ENCODE measurements at regions of chr11 and their contacts with region 1.

Region 1: DNA sequence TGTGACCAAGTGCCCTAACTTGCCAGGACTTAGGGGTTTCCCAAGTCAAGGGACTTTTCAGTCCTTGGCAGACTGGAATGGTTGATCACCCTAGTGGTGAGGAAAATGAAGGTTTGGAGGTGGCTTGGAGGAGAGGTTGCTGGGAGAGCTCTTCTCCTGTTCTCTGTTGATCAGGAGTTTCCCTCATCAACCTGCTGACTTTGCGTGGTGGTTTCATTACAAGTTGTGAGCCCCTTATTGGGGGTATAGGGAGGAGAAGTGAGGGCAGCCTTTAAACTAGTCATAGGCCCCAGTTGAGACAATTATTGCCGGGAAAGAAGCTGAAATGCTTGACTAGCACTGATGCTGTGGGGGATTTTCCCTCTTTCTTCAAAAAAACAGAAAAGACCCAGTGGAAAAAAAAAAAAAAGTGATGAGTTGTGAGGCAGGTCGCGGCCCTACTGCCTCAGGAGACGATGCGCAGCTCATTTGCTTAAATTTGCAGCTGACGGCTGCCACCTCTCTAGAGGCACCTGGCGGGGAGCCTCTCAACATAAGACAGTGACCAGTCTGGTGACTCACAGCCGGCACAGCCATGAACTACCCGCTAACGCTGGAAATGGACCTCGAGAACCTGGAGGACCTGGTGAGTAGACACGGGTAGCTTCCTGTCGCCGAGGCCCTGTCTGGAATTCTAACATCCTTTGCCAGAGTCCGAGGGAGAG is at the start of gene CXCR5:
- DNase-seq: peak; percentile 72
- H3K4me3 Mint-ChIP-seq: peak within 1 kb of the TSS; percentile 66
- H3K27ac Mint-ChIP-seq: peak within 1 kb of the TSS; percentile 83
- H3K4me1 Mint-ChIP-seq: peaks cover 59% of the 10 kb centered on the region
- H3K27me3 Mint-ChIP-seq: no peaks in the 10 kb centered on the region
- total RNA-seq, gene CXCR5: 6.1 and 6.4 TPM in 2 replicates

Region 2: DNA sequence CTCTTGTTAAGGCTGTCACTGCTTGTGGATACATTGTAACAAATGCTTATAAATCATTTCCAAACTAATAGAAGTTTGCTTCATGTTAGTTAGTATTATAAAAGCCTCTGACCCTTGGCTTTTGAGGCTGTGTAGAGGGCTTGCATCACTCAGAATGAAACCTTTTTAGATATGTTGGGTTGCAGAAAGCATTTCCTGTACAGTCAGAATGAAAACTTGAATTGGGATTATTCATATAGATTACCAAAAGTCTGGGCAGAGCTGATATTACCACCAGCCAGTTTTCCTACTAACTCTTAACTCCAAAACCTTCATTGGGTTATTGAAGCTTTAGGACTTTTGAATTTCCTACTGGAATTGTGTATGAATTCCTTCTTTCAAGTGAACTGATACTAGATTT is 435.2 kb before region 1 on chr11:
- intact Hi-C with region 1: loop called (anchors 5 kb)
- DNase-seq: peak; percentile 74
- H3K4me3 Mint-ChIP-seq: peak overlapping the region; percentile 44
- H3K27ac Mint-ChIP-seq: peak overlapping the region; percentile 35
- H3K4me1 Mint-ChIP-seq: peaks cover 57% of the 10 kb centered on the region
- H3K27me3 Mint-ChIP-seq: no peaks in the 10 kb centered on the region

Region 3: GRCh38 chr11:118660681-118661424 is 222.7 kb before region 1 on chr11:
- intact Hi-C with region 1: no loop called
- DNase-seq: no peak
- H3K4me3 Mint-ChIP-seq: no peak overlapping the region
- H3K27ac Mint-ChIP-seq: no peak overlapping the region
- H3K4me1 Mint-ChIP-seq: peaks cover 3% of the 10 kb centered on the region
- H3K27me3 Mint-ChIP-seq: no peaks in the 10 kb centered on the region

Region 4: DNA sequence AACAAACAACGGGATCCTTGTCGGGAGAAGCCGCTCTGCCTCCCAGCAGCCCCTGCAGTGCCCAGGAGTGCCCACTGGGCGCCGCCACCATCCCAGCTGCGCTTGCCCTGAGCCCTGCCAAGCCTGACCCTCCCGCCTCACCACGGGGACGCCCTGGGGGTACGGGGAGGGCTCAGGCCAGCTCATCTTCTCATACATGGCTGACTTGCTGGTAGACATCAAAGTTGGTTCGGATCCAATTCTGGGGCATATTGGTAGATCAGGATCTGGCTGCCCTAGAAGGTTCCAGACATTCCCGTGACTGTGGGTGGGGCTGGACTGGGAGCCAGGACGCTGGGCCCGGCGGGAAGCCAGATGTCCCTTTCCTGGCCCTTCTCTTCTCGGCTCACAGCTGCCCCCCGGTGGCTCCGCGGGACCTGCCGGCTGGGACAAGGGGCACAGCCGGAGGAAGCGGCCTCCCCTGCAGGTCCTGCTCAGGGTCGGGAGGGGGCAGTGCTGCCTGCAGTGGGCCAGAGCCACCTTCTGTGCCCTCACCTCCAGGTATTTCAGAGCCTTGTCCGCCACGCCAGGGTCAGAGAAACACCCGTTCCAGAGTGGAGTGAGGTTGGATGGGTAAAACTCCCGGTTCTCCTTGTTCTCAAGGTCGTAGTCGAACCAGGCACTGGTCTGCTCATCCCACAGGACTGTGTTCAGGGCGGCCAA is 193.5 kb before region 1 on chr11:
- intact Hi-C with region 1: loop called (anchors 5 kb)
- DNase-seq: peak; percentile 94
- H3K4me3 Mint-ChIP-seq: peak overlapping the region; percentile 79
- H3K27ac Mint-ChIP-seq: peak overlapping the region; percentile 60
- H3K4me1 Mint-ChIP-seq: peaks cover 27% of the 10 kb centered on the region
- H3K27me3 Mint-ChIP-seq: peaks cover 12% of the 10 kb centered on the region

Region 5: DNA sequence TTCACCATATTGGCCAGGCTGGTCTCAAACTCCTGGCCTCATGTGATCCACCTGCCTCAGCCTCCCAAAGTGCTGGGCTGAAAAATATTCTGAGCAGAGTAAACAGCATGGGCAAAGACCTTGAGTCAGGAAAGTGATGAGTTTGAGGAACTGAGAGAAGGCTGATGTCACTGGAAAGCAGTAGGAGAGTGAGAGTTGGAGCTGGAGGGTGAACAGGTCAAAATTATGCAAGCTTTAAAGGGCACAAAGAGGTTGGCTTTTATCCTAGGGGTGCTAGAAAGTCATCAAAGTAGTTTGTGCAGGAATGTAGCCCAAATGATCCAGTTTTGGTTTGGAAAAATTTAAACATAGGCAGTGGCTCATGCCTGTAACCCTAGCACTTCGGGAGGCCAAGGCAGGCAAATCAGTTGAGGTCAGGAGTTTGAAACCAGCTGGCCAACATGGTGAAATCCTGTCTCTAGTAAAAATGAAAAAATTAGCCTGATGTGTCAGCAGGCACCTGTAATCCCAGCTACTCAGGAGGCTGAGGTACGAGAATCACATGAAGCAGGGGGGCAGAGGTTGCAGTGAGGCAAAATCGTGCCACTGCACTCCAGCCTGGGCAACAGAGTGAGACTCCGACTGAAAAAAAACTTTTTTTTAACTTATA is 44.5 kb before region 1 on chr11:
- intact Hi-C with region 1: loop called (anchors 2 kb)
- DNase-seq: no peak
- H3K4me3 Mint-ChIP-seq: no peak overlapping the region
- H3K27ac Mint-ChIP-seq: peak overlapping the region; percentile 14
- H3K4me1 Mint-ChIP-seq: peaks cover 28% of the 10 kb centered on the region
- H3K27me3 Mint-ChIP-seq: no peaks in the 10 kb centered on the region

Region 6: DNA sequence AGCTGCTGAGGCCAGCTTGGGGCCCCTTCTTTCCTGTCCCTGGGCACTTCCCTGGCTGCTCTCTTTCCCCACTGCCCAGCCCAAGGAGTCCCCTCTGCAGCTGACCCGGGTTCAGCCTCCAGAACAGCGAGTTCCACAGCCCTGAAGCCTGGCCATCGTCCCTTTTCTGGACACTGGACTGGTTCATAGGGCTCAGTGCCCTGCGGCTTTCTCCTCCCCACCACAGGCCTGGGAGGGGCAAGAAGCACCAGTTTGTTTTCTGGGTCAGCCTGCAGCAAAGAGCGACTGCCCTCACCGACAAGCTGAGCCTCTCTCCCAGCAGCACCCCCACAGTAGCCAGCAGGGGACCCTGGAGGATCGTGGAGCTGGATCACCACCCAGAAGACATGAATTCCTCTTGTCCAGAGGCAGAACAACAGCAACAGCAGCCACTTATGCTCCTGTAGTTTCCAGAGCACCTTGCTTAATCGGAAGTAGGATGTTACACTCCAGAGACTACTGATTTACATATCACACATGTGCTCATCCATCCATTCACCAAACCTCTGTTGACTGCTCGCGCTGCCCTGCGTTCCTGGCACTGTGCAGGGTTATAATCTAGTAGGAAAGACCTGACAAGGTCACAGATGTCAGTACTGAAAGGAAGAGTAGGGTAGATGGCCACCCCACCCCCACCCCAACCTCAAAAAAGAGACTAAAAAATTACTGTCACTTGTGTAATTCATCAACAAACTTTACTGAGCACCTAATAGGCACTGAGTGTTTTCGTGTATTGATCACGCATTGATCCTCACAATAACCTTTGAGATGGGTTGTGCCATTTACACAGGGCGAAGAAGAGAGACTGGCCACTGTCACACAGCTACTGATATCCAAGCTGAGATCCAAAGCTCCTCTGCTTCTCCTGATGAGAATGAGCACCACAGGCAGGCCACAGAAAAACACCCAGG is 12.8 kb before region 1 on chr11:
- intact Hi-C with region 1: loop called (anchors 1 kb)
- DNase-seq: peak; percentile 74
- H3K4me3 Mint-ChIP-seq: peak overlapping the region; percentile 74
- H3K27ac Mint-ChIP-seq: peak overlapping the region; percentile 98
- H3K4me1 Mint-ChIP-seq: peaks cover 42% of the 10 kb centered on the region
- H3K27me3 Mint-ChIP-seq: no peaks in the 10 kb centered on the region

Region 7: GRCh38 chr11:118895142-118896039 is 11.9 kb after region 1 on chr11:
- intact Hi-C with region 1: loop called (anchors 1 kb)
- DNase-seq: peak; percentile 91
- H3K4me3 Mint-ChIP-seq: peak overlapping the region; percentile 83
- H3K27ac Mint-ChIP-seq: peak overlapping the region; percentile 83
- H3K4me1 Mint-ChIP-seq: peaks cover 60% of the 10 kb centered on the region
- H3K27me3 Mint-ChIP-seq: no peaks in the 10 kb centered on the region